OCI-LY7 (cell line): ENCODE measurements at regions of chr16 and their contacts with region 1.

Region 1: DNA sequence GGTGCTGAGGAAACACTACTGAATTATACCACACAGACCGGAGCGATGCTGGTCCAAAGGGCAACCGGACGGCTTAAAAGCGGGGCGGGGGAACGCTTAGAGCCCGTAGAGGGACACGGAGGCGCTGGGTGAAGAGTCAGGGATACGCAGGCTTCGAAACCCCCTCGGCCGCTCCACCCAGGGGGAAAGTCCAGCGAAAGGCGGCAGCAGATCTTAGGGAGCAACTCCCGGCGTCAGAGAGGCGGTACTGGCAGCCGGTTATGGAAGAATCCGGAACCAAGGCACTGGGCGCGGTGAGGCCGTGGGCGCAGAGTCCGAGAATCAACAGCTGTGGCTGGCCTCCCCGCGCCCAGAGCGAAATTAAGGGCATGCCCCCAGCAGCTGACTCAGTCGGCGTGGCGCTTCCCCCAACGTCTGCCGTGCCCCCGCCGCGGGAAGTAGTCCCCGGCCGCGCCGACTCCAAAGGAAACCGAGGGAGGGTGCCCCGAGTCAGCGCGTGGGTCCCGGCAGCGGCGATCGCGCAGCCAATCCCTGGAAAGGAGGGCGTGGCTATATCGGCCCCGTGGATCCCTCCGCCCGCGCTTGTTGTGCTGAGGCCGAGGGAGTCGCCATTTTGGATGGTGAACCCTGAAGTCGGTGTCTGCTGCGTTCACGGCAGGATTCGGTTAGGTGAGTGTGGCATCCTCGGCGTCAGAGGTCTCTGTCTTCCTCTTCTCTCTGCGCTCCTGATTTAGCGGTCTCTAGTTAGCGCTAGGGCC is at the start of gene IST1:
- DNase-seq: peak; percentile 99
- H3K4me3 ChIP-seq: peak within 1 kb of the TSS; percentile 95
- H3K27ac ChIP-seq: peak within 1 kb of the TSS; percentile 73
- H3K4me1 ChIP-seq: peaks cover 30% of the 10 kb centered on the region
- CTCF ChIP-seq: no peak
- total RNA-seq, gene IST1: 147 and 152 TPM in 2 replicates

Region 2: GRCh38 chr16:71808593-71809459 is 86.3 kb before region 1 on chr16 and contains the start of gene AP1G1:
- CTCF ChIA-PET with region 1: no interaction called
- POLR2A ChIA-PET with region 1: interaction called, 3 read pairs
- intact Hi-C with region 1: loop called (anchors 2 kb)
- DNase-seq: peak; percentile 99
- H3K4me3 ChIP-seq: peak within 1 kb of the TSS; percentile 98
- H3K27ac ChIP-seq: peak within 1 kb of the TSS; percentile 85
- H3K4me1 ChIP-seq: peaks cover 23% of the 10 kb centered on the region
- CTCF ChIP-seq: no peak
- total RNA-seq, gene AP1G1: 57.3 and 57.9 TPM in 2 replicates

Region 3: GRCh38 chr16:71927383-71927782 is 32.3 kb after region 1 on chr16:
- CTCF ChIA-PET with region 1: no interaction called
- POLR2A ChIA-PET with region 1: no interaction called
- intact Hi-C with region 1: no loop called
- DNase-seq: no peak
- H3K4me3 ChIP-seq: no peak overlapping the region
- H3K27ac ChIP-seq: no peak overlapping the region
- H3K4me1 ChIP-seq: peaks cover 7% of the 10 kb centered on the region
- CTCF ChIP-seq: no peak

Region 4: DNA sequence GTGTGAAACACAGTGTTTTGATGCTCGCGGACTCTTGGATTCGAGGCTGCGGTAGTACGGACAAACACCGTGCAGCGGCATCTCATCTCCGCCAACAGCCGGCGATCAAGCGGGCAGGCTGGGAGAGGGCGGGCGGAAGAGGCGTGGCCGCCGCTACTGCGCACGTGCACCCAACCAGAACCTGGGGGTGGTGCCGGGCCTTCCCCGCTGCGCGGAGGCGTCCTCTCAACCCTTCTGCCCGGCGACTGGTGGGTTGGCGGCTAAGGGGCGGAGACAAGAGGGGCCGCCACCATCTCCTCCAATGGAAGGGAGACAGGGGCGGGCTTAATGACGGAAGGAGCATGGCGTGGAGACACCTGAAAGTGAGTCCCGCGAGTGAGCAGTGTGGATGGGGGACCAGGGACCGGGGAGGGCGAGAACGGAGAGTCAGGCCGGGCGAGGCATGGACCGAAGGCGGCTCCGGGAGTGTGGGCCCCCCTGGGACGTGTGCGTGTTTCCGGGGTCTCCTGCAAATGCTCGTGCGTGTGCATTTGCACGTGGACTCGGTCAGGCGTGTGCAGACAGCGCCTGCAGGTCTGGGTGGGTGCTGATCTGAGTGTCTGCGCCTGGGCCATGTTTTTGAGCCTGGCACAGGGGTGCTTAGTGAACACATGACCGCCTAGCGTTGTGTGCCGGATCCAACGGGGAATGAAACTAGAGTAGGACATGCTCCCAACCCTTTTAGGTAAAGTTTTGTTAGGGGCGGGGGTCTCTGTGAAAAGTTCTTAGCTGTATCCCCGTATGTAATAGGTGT is 113.5 kb after region 1 on chr16 and contains the start of gene DHODH:
- CTCF ChIA-PET with region 1: no interaction called
- POLR2A ChIA-PET with region 1: interaction called, 3 read pairs
- intact Hi-C with region 1: loop called (anchors 1 kb)
- DNase-seq: peak; percentile 98
- H3K4me3 ChIP-seq: peak within 1 kb of the TSS; percentile 79
- H3K27ac ChIP-seq: peak within 1 kb of the TSS; percentile 52
- H3K4me1 ChIP-seq: peaks cover 6% of the 10 kb centered on the region
- CTCF ChIP-seq: no peak
- total RNA-seq, gene DHODH: 12.3 and 15.7 TPM in 2 replicates